Upper lobe of right lung (tissue), 1 donor: ENCODE measurements at regions of chr6 and their contacts with region 1.

Region 1: DNA sequence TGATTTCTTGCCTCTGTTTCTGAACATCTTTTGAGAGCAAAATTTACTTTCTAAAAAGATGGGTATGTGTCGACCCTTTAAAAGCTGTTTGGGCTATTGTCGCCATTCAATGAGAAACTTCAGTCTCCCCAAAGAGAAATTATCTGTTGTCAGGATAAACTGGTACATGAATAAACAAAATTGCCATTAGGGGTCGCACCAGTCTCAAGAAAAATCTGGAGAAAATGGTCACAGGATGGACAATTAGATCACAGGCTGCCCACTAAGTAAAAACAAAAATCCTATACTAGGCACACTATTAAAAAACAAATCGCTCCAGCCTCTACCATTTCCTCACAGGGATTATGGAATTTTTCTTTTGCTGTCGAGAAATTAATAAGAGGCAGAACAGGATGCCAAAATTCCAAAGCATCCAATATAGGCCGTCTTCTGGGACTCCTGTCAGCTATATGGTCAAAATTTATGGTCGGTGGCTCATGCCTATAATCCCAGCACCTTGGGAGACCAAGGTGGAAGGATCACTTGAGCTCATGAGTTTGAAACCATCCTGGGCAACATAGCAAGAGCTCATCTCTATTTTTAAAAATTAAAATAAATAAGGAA is 5.5 kb upstream of the HLA-E start:
- DNase-seq: no peak
- ATAC-seq: peak; percentile 63
- H3K4me3 ChIP-seq: no peak overlapping the region
- H3K27ac ChIP-seq: no peak overlapping the region
- H3K4me1 ChIP-seq: peaks cover 7% of the 10 kb centered on the region
- H3K27me3 ChIP-seq: peaks cover 32% of the 10 kb centered on the region
- CTCF ChIP-seq: peak; percentile 64

Region 2: GRCh38 chr6:30541515-30542403 is 58.0 kb after region 1 on chr6:
- intact Hi-C with region 1: loop called (anchors 5 kb)
- DNase-seq: peak; percentile 84
- ATAC-seq: peak; percentile 92
- H3K4me3 ChIP-seq: peak overlapping the region; percentile 48
- H3K27ac ChIP-seq: peak overlapping the region; percentile 65
- H3K4me1 ChIP-seq: peaks cover 29% of the 10 kb centered on the region
- H3K27me3 ChIP-seq: no peaks in the 10 kb centered on the region
- CTCF ChIP-seq: peak; percentile 99

Region 3: DNA sequence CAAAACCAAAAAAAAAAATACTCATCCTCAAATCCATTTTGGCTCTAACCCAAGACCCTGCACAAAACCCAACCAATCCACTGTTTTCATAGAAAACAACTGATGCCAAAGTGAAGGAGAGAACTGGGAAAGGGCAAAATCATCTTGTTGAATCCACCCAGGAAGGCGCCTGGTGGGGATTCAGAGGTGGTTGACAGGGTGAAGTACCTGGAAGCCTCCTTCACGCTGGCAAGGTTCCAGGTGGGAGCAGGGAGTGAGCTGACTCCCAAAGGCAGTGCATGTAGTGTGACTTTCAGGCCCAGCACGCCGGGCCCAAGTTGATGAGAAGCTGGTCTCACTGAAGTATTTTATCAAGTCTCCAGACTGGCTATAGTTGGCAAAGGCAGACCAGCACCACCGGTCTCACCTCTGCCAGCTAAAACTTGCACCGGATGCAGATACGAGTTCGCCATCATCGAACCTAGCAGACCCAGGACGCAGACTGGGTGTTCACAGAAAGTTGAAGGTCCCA is 116.7 kb after region 1 on chr6:
- intact Hi-C with region 1: loop called (anchors 5 kb)
- DNase-seq: peak; percentile 69
- ATAC-seq: no peak
- H3K4me3 ChIP-seq: no peak overlapping the region
- H3K27ac ChIP-seq: no peak overlapping the region
- H3K4me1 ChIP-seq: no peaks in the 10 kb centered on the region
- H3K27me3 ChIP-seq: no peaks in the 10 kb centered on the region
- CTCF ChIP-seq: no peak